IMR-90 (cell line): ENCODE measurements at regions of chr1 and their contacts with region 1.

Region 1: GRCh38 chr1:161274874-161275273 is 16.3 kb downstream of the PCP4L1 start:
- DNase-seq: no peak
- ATAC-seq: no peak
- H3K4me3 ChIP-seq: no peak overlapping the region
- H3K27ac ChIP-seq: no peak overlapping the region
- H3K4me1 ChIP-seq: 0 out of 2 replicates have a peak, but pooled peaks cover 1% of the 10 kb centered on the region
- H3K27me3 ChIP-seq: peaks cover 16% of the 10 kb centered on the region
- CTCF ChIP-seq: no peak
- POLR2A ChIP-seq: no peak
- RAD21 ChIP-seq: no peak

Region 2: DNA sequence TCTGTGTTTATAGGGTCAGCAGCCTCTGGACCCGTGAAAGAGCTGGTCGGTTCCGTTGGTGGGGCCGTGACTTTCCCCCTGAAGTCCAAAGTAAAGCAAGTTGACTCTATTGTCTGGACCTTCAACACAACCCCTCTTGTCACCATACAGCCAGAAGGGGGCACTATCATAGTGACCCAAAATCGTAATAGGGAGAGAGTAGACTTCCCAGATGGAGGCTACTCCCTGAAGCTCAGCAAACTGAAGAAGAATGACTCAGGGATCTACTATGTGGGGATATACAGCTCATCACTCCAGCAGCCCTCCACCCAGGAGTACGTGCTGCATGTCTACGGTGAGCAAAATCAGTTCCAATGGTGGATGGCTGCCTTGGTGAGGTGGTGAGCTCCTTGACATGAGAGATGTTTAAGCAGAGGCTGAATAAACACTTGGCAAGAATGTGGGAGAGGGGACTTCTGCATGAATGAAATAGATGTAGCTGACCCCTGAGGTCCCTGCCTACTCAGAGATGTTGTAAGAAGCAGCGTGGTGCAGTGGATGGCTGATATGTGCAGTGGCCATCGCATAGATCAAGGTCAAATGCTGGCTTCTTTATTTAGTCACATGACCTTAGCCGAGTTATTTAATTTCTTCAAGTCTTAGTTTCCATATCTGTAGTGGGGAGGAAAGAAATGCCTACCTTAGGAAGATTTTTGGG is 526.5 kb before region 1 on chr1:
- CTCF ChIA-PET with region 1: no interaction called
- POLR2A ChIA-PET with region 1: no interaction called
- dilution Hi-C with region 1: no loop called
- in situ Hi-C with region 1: no loop called
- intact Hi-C with region 1: no loop called
- DNase-seq: no peak
- ATAC-seq: no peak
- H3K4me3 ChIP-seq: no peak overlapping the region
- H3K27ac ChIP-seq: no peak overlapping the region
- H3K4me1 ChIP-seq: no peaks in the 10 kb centered on the region
- H3K27me3 ChIP-seq: no peaks in the 10 kb centered on the region; the same call in 1 of the 2 replicates
- CTCF ChIP-seq: no peak
- POLR2A ChIP-seq: no peak
- RAD21 ChIP-seq: no peak

Region 3: DNA sequence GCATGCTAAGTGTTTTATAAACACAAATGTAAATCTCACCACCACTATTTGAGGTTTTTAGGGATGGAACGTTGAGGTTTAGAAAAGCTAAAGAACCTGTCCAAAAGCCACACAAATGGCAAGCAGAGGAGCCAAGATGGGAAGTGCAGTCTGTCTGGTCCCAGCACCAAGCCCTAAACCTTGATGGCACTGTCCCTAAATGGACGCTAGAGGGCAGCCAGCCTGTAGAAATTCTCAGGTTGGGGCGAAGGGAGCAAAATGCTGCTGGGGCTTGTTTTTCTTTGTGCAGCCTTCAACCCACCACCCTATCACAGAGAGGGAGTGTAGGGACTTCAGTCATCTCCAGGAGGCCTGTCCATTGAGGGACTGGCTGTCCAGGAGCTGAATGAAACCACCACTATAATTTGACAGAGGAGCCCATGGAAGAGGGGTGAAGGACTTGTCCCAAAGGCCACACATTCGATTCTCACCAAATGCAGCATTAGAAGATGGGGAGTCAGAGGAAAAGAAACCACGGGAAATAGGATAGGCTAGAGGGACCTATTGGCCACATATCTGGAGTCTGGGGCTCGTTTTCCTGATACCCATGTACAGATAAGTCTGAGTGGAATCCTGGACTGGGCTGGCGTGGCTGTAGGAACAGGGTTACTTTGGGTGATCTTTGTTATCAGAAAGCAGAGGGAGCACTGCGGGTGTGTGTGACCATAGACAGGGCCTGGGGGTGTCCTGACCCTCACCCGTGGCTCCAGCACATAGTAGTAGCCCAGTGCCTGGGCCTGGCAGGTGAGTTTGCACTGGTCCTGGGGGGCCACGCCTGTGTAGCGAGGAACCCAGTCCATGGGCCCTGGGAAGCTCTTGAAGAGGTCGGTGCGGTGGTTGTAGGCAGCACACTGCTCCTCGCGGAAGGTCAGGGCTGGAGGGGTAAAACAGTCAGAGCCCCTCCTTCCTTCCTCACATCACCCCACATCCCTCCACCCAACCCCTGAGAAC is 82.1 kb before region 1 on chr1:
- CTCF ChIA-PET with region 1: no interaction called
- POLR2A ChIA-PET with region 1: no interaction called
- dilution Hi-C with region 1: no loop called
- in situ Hi-C with region 1: no loop called
- intact Hi-C with region 1: no loop called
- DNase-seq: peak; percentile 65
- ATAC-seq: peak; percentile 92
- H3K4me3 ChIP-seq: no peak overlapping the region
- H3K27ac ChIP-seq: no peak overlapping the region
- H3K4me1 ChIP-seq: peaks cover 11% of the 10 kb centered on the region
- H3K27me3 ChIP-seq: no peaks in the 10 kb centered on the region
- CTCF ChIP-seq: peak; percentile 91
- POLR2A ChIP-seq: no peak
- RAD21 ChIP-seq: peak; percentile 80

Region 4: DNA sequence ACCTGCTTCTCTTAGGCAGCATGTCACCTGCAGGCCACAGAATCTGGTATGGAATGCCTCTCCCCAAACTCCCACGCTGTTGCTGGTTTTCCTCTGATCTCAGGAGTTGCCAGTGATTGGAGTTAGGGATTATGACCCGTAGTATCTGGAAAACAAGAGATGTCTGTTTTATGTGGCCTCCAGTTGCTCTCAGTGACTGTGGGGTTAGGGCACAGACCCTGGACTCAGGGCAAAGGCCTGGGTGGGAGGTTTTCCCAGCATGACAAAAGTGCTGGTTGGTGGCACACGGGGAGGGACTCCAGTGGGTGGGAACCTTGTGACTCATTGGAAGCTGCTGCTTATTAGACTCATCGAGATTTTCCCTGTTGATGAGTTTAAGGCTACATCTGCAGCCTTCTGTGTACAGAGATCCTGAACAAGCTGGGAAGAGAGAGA is 36.8 kb before region 1 on chr1 and contains the start of gene NR1I3:
- CTCF ChIA-PET with region 1: no interaction called
- POLR2A ChIA-PET with region 1: no interaction called
- dilution Hi-C with region 1: no loop called
- in situ Hi-C with region 1: no loop called
- intact Hi-C with region 1: loop called (anchors 5 kb)
- DNase-seq: no peak
- ATAC-seq: no peak
- H3K4me3 ChIP-seq: no peak within 1 kb of the TSS
- H3K27ac ChIP-seq: no peak within 1 kb of the TSS
- H3K4me1 ChIP-seq: no peaks in the 10 kb centered on the region
- H3K27me3 ChIP-seq: peaks cover 12% of the 10 kb centered on the region
- CTCF ChIP-seq: no peak
- POLR2A ChIP-seq: no peak
- RAD21 ChIP-seq: no peak
- total RNA-seq, gene NR1I3: not detected in 2 replicates